ENCODE measurements at regions of chr9 and their contacts with region 1.

Region 1: DNA sequence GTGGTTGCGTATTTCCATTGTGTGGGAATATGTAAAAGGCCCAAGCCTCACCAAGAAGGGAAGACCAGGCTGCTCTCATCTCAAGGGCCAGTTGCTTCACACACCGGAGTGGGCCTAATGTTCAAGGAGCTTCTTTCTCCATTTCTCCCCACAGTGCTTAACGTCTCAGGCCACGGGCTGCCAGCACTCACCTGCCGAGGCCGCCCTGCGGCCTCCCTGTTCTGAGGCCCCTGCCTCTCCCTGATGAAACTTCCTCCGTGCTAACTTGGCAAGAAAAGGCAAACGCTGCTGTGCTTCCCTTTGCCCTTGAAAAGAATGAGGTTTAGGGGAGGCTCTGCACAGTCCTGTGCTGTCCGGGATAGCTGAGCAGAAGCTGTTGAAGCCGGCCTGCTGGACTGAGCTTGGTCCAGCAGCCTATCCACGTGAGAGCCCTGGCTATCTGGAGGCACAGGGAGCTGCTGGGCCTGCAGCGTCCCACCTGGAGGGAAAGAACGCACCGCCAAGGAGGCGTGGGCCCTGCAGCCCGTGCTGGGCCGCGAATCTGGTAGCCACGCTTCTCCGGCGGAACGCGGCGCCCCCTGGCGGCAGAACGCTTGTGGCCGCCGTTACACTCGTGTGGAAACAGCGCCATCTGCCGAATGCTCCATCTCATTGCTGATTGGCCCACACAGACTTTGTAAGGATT is 73.5 kb upstream of the PRSS3 start:
- DNase-seq: peak; percentile 87 to 88 (median 87)
- ATAC-seq: peak; percentile 96 to 99 (median 98)
- H3K4me3 ChIP-seq: no peak overlapping the region
- H3K27ac ChIP-seq: no peak overlapping the region
- H3K4me1 ChIP-seq: peaks cover 0 to 3% (median 0%) of the 10 kb centered on the region in 4 donors
- H3K27me3 ChIP-seq: no peaks in the 10 kb centered on the region
- CTCF ChIP-seq: peak; percentile 100
- POLR2A ChIP-seq: no peak

Region 2: DNA sequence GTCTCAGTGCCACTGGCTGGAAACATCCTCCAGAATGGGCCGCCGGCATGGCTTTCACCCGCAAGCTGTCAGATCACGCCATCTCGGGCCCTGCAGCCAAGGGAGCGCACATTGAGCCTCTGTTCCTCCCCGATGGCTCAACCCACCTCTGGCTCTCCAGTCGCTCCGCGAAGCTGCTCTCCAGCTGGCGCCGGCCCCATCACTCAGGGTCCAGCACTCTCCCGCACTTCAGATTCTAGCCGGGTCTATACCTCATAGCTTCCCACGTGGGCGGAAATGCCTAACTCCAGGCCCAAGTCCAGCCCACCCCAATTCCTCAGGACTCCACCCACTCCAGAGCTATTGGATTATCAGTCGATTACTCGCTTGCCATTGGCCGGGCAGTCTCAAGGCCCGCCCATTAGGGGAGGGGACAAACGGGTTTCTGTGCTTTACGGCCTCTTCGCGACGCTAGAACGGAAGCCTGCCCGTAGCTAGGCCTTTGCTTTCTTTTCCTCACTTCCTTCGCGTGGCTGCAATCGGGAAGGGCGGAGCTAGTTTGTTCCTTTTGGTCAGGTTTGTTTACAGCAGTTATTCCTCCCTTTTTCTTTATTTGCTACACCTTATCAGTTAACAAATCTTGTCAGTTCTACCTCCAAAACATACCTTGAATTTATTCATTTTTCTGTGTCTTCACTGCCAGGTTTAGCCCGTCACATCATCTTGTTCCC is 248.0 kb before region 1 on chr9 and contains the start of gene NOL6:
- intact Hi-C with region 1: no loop called
- DNase-seq: peak; percentile 94 to 98 (median 97)
- ATAC-seq: peak; percentile 99
- H3K4me3 ChIP-seq: peak within 1 kb of the TSS; percentile 80 to 95 (median 93)
- H3K27ac ChIP-seq: peak within 1 kb of the TSS; percentile 49 to 61 (median 57)
- H3K4me1 ChIP-seq: peaks cover 0 to 14% (median 6%) of the 10 kb centered on the region in 4 donors
- H3K27me3 ChIP-seq: no peaks in the 10 kb centered on the region
- CTCF ChIP-seq: no peak
- POLR2A ChIP-seq: peak; percentile 58
- total RNA-seq, gene NOL6: 12.3 to 26.1 (median 15.4) TPM

Region 3: GRCh38 chr9:33623658-33624586 is 97.9 kb before region 1 on chr9:
- intact Hi-C with region 1: loop called in 1 of 2 experiments (anchors 5 kb)
- DNase-seq: peak; percentile 40 to 62 (median 60)
- ATAC-seq: peak; percentile 97 to 99 (median 98)
- H3K4me3 ChIP-seq: no peak overlapping the region
- H3K27ac ChIP-seq: no peak overlapping the region
- H3K4me1 ChIP-seq: no peaks in the 10 kb centered on the region
- H3K27me3 ChIP-seq: no peaks in the 10 kb centered on the region
- CTCF ChIP-seq: peak; percentile 81 to 88 (median 86)
- POLR2A ChIP-seq: no peak

Measured in right lobe of liver (tissue), 6 donors.